ENCODE measurements at regions of chr3 and their contacts with region 1.

Region 1: DNA sequence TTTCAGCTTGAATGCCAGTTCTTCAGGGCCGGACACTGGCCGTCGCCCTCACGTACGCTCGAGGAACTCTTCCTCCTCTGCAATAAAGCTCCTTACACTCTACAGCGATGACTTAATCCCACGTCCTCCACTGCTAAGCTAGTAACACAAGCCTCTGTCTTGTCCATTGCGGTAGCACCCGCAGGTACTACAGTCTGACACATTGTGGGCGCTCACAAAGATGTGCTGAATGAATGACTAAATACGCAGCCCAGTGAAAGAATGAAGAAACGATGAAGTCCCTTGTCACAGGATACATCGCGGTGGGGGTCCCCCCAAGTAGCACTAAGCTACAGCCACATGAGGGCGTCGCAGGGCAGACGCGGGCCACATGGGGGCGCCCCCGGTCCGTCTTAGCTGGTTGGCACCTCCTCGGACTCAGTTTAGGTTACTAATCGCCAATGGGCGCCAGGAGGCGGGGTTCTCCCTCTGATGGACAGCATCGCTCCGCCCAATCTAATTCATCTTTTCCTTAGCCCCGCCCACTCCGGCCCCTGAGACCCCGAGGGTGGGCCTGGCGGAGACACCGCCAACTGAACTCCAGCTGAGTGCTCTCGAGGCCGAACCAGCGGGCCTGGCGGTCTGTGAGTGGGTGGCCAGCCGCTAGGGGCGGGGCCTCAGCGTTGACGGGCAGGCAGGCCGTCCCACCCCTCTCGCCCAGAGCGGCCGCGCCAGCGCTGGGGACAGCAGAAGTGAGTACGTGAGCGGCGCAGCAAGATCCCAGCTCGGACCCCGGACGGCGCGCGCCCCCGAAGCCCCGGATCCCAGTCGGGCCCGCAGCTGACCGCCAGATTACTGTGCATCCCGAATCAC is at the start of gene EPHB3:
- DNase-seq: peak; percentile 100
- H3K4me3 Mint-ChIP-seq: peak within 1 kb of the TSS; percentile 84
- H3K27ac Mint-ChIP-seq: peak within 1 kb of the TSS; percentile 15
- H3K4me1 Mint-ChIP-seq: peaks cover 51% of the 10 kb centered on the region
- H3K27me3 Mint-ChIP-seq: peaks cover 68% of the 10 kb centered on the region
- CTCF ChIP-seq: peak; percentile 100
- total RNA-seq, gene EPHB3: 2.5 and 2.8 TPM in 2 replicates

Region 2: GRCh38 chr3:184099806-184100686 is 461.2 kb before region 1 on chr3:
- CTCF ChIA-PET with region 1: no interaction called
- intact Hi-C with region 1: no loop called
- DNase-seq: no peak
- H3K4me3 Mint-ChIP-seq: no peak overlapping the region
- H3K27ac Mint-ChIP-seq: no peak overlapping the region
- H3K4me1 Mint-ChIP-seq: no peaks in the 10 kb centered on the region
- H3K27me3 Mint-ChIP-seq: peaks cover 38% of the 10 kb centered on the region
- CTCF ChIP-seq: no peak

Region 3: DNA sequence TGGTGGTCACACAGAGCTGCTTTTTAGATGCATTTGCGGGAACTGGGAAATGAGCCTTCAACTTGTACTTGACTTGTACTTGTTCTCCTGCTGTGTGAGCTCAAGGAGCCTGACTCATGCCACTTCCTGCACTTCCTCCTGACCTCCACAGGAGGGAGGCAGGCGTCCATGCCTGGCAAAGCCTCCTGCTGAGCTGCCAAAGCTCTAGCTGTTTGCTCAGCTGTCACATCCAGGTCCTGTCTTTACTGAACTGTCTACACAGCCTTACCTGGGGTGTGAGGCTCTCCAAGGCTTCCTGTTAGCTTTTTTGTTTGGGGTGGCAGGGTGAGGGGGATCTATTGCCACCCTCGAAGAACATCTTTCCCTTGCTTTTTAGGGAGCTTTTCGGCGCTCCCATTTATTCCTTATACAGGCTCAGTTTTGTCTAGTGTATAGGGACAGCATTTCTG is 189.7 kb before region 1 on chr3:
- CTCF ChIA-PET with region 1: interaction called, 21 read pairs
- intact Hi-C with region 1: no loop called
- DNase-seq: peak; percentile 91
- H3K4me3 Mint-ChIP-seq: no peak overlapping the region
- H3K27ac Mint-ChIP-seq: peak overlapping the region; percentile 58
- H3K4me1 Mint-ChIP-seq: peaks cover 7% of the 10 kb centered on the region
- H3K27me3 Mint-ChIP-seq: peaks cover 48% of the 10 kb centered on the region
- CTCF ChIP-seq: peak; percentile 99

Region 4: DNA sequence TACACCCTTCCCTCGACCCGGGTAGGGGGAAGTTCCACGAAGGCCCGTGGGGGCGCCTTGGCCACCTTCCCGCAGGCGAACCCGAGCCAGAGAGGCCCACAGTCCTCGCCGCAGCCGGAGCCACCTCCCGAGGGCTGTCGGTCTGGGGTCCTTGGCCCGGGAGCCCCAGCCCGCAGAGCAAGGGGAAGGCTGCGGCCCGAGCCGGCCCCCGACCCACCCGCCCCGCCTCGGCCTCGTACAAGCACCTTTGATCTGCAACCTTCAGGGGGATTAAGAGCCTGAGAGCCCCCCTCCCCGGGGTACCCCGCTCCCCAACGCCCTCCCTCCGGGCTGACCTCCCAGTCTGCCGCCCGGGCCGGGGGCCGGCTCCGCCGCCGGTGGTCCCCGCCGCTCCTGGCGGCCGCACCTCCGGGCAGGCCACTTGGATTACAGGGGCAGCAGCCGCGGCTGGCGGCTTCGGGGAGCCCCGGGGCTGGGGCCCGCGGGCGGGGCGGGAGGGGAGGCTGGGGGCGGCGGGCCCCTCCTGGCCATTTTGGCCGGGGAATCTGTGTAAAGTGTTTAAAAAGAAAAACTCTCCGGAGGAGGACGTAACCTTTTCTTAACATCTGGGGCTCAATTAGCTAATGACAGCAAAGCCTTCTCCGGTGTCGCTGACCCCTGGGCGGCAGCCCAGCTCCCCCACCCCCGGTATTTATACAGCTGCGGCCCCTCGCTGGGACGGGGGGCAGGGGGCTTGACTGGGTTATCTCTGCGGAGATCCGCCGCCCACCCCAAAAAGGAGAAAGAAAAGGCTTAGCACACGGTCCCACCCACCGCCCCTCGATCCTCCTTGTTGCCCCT is 40.5 kb after region 1 on chr3:
- CTCF ChIA-PET with region 1: interaction called, 13 read pairs
- intact Hi-C with region 1: no loop called
- DNase-seq: no peak
- H3K4me3 Mint-ChIP-seq: peak overlapping the region; percentile 12
- H3K27ac Mint-ChIP-seq: peak overlapping the region; percentile 0
- H3K4me1 Mint-ChIP-seq: peaks cover 21% of the 10 kb centered on the region
- H3K27me3 Mint-ChIP-seq: peaks cover 72% of the 10 kb centered on the region
- CTCF ChIP-seq: no peak

Region 5: GRCh38 chr3:184710870-184711492 is 149.7 kb after region 1 on chr3:
- CTCF ChIA-PET with region 1: interaction called, 9 read pairs
- intact Hi-C with region 1: loop called (anchors 1 kb)
- DNase-seq: peak; percentile 29
- H3K4me3 Mint-ChIP-seq: peak overlapping the region; percentile 82
- H3K27ac Mint-ChIP-seq: peak overlapping the region; percentile 75
- H3K4me1 Mint-ChIP-seq: peaks cover 27% of the 10 kb centered on the region
- H3K27me3 Mint-ChIP-seq: no peaks in the 10 kb centered on the region
- CTCF ChIP-seq: no peak

Region 6: GRCh38 chr3:184740524-184741484 is 179.5 kb after region 1 on chr3:
- CTCF ChIA-PET with region 1: interaction called, 24 read pairs
- intact Hi-C with region 1: no loop called
- DNase-seq: no peak
- H3K4me3 Mint-ChIP-seq: no peak overlapping the region
- H3K27ac Mint-ChIP-seq: no peak overlapping the region
- H3K4me1 Mint-ChIP-seq: no peaks in the 10 kb centered on the region
- H3K27me3 Mint-ChIP-seq: peaks cover 44% of the 10 kb centered on the region
- CTCF ChIP-seq: no peak

Region 7: GRCh38 chr3:184777336-184778004 is 216.2 kb after region 1 on chr3:
- CTCF ChIA-PET with region 1: interaction called, 17 read pairs
- intact Hi-C with region 1: loop called (anchors 1 kb)
- DNase-seq: peak; percentile 94
- H3K4me3 Mint-ChIP-seq: no peak overlapping the region
- H3K27ac Mint-ChIP-seq: no peak overlapping the region
- H3K4me1 Mint-ChIP-seq: peaks cover 21% of the 10 kb centered on the region
- H3K27me3 Mint-ChIP-seq: peaks cover 82% of the 10 kb centered on the region
- CTCF ChIP-seq: peak; percentile 96

Region 8: DNA sequence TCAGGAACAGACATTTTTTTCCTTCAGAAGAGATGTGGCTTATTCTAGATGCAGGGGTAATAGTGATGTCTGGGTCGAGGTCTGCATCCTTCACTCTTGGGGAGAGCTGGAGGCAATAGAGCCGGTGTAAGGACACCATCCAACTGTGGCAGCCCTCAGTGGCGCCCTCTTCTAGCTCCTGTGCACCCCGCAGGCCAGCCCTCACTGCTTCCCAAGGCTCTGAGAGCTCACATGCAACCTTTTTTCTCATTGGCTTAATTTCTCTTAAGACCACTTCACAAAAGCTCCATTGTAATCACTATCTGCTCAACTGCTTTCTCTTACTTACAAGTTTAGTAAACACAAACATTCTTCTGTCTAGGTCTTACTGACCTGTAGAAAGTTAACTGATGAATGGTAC is 246.7 kb after region 1 on chr3:
- CTCF ChIA-PET with region 1: interaction called, 14 read pairs
- intact Hi-C with region 1: loop called (anchors 1 kb)
- DNase-seq: peak; percentile 49
- H3K4me3 Mint-ChIP-seq: no peak overlapping the region
- H3K27ac Mint-ChIP-seq: no peak overlapping the region
- H3K4me1 Mint-ChIP-seq: peaks cover 21% of the 10 kb centered on the region
- H3K27me3 Mint-ChIP-seq: no peaks in the 10 kb centered on the region
- CTCF ChIP-seq: no peak

Measured in Calu3 (cell line).